ENCODE measurements at regions of chr6 and their contacts with region 1.

Region 1: DNA sequence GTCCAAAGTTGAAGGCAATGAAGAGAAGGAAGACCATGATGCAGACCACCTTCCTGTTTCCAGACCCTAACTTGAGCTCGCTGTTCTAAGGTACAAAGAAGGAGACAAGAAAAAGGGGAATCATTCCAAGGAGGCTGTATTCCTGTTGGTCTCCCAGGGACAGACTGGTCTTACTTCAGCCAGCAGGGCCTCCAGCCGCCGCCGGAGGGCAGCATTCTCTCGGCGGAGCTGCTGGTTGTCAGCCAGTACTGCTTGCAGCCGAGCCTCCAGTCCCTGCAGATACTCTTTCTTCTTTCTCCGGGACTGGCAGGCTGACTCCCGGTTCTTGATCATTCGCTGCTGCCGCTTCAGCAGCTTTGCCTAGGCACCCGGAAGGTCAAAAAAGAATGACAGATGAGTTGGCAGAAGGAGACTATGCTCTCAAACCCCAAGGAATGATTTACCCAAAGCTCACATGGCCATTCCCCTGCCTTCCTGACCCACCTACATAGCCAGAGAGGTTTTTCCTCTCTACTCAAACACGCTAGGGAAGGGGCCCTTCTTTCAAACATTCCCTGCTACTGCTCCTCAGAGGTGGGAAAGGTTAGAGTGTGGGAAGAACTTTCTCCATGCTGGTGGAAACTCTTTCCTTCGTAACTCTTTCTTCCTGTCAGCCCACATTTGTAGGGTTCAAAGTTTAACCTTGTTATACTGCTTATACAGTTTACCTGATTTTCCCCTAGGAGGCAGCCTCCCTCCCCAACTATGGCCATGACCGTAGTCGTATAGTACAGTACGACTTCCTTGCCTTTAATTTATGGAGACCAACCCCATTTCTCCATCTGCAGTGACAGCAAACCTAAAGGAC is 9.0 kb downstream of the ATF6B start:
- DNase-seq: peak; percentile 68 to 81
- H3K4me3 ChIP-seq: no peak overlapping the region
- H3K27ac ChIP-seq: no peak overlapping the region
- H3K4me1 ChIP-seq: peaks cover 16% of the 10 kb centered on the region; the same call in 1 of the 2 replicates
- H3K27me3 ChIP-seq: no peaks in the 10 kb centered on the region
- CTCF ChIP-seq: peak; percentile 86

Region 2: GRCh38 chr6:31453259-31453658 is 665.7 kb before region 1 on chr6:
- CTCF ChIA-PET with region 1: no interaction called
- POLR2A ChIA-PET with region 1: no interaction called
- intact Hi-C with region 1: no loop called
- DNase-seq: no peak
- H3K4me3 ChIP-seq: no peak overlapping the region
- H3K27ac ChIP-seq: no peak overlapping the region
- H3K4me1 ChIP-seq: no peaks in the 10 kb centered on the region
- H3K27me3 ChIP-seq: peaks cover 24% of the 10 kb centered on the region; the same call in 1 of the 2 replicates
- CTCF ChIP-seq: no peak

Region 3: GRCh38 chr6:31763619-31763940 is 355.4 kb before region 1 on chr6:
- CTCF ChIA-PET with region 1: no interaction called
- POLR2A ChIA-PET with region 1: no interaction called
- intact Hi-C with region 1: no loop called
- DNase-seq: no peak
- H3K4me3 ChIP-seq: no peak overlapping the region
- H3K27ac ChIP-seq: no peak overlapping the region
- H3K4me1 ChIP-seq: peaks cover 5% of the 10 kb centered on the region; the same call in 1 of the 2 replicates
- H3K27me3 ChIP-seq: no peaks in the 10 kb centered on the region
- CTCF ChIP-seq: no peak

Region 4: DNA sequence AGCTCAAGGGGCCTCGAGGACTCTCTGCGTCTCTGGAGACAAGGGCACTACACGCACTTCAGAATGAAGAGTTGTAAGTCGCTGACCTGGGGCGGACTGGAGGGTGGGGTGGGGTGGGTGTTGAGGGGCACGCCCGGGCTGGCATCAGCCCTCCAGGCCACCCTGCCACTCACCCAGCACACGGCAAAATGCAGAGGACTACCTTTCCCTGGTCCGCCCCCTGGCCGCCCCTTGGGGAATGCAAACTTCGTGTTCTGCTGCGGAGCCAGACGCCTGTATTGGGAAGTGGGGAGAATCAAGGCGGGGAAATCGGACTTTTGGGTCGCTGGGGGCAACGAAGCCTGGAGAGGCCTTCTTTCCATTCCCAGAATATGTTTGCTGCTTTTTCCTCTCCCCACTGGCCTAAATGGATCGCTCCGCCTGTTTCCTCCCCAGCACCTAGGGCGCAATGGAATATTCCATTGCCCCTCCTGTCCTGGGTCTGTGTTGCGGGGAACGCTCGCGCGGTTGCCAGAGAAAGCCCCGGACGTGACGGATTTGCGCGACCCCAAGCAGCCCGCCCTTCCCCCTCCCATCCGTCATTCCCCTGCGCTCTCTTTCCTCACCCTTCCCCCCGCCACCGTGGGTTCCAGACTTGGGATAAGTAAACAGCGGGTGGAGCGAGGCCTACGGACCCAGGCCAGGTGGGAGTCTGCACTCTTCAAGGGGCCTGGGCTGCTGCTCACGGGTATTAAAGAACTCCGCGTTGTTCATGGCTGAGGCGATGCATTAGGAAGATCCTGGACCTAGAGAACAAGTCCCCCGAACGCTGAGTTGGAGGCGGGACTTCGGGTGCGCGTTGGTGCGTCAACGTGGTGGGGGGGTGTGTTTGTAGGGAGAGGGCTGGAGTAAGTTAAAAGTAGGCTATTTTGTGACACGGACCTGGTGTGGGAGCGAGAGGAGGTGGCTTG is 34.8 kb after region 1 on chr6 and contains the start of gene PPT2:
- CTCF ChIA-PET with region 1: interaction called, 10 read pairs
- POLR2A ChIA-PET with region 1: no interaction called
- intact Hi-C with region 1: loop called (anchors 1 kb)
- DNase-seq: peak; percentile 70 to 77
- H3K4me3 ChIP-seq: peak within 1 kb of the TSS; percentile 77
- H3K27ac ChIP-seq: peak within 1 kb of the TSS; percentile 96
- H3K4me1 ChIP-seq: peaks cover 18% of the 10 kb centered on the region
- H3K27me3 ChIP-seq: no peaks in the 10 kb centered on the region
- CTCF ChIP-seq: peak; percentile 45; the same call in 1 of the 2 replicates
- total RNA-seq, gene PPT2: 38.2 and 42.5 TPM in 2 replicates

Region 5: GRCh38 chr6:32195652-32195901 is 76.6 kb after region 1 on chr6:
- CTCF ChIA-PET with region 1: interaction called, 4 read pairs
- POLR2A ChIA-PET with region 1: no interaction called
- intact Hi-C with region 1: loop called (anchors 5 kb)
- DNase-seq: peak; percentile 98 to 100
- H3K4me3 ChIP-seq: peak overlapping the region; percentile 96; the same call in 1 of the 2 replicates
- H3K27ac ChIP-seq: no peak overlapping the region
- H3K4me1 ChIP-seq: peaks cover 18% of the 10 kb centered on the region
- H3K27me3 ChIP-seq: peaks cover 4% of the 10 kb centered on the region
- CTCF ChIP-seq: no peak; the same call in none of the 2 replicates

Region 6: DNA sequence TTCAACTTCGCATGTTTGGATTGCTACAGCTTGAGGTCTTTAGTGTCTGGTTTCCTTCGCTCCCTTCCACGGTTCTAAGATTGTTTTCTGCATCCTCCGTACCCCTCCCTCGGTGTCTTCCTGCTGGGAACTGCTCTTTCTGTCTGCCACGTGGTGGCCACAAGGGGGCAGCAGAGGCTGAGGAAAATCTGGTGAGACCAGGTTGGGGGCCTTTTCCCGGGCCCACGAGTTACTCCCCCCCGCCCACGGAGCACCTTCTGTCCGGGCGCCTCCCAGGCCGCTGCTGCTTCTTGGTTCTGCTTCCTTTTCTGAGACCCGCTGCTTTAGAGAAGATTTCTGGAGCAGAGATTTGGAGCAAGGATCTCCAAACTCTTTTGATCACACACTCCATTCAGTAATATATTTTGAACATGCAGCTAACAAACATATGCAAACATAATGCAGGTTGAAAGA is 126.0 kb after region 1 on chr6:
- CTCF ChIA-PET with region 1: no interaction called
- POLR2A ChIA-PET with region 1: no interaction called
- intact Hi-C with region 1: loop called (anchors 1 kb)
- DNase-seq: peak in 1 of 2 experiments; percentile 71
- H3K4me3 ChIP-seq: no peak overlapping the region
- H3K27ac ChIP-seq: no peak overlapping the region
- H3K4me1 ChIP-seq: no peaks in the 10 kb centered on the region
- H3K27me3 ChIP-seq: peaks cover 23% of the 10 kb centered on the region
- CTCF ChIP-seq: peak; percentile 95

Region 7: DNA sequence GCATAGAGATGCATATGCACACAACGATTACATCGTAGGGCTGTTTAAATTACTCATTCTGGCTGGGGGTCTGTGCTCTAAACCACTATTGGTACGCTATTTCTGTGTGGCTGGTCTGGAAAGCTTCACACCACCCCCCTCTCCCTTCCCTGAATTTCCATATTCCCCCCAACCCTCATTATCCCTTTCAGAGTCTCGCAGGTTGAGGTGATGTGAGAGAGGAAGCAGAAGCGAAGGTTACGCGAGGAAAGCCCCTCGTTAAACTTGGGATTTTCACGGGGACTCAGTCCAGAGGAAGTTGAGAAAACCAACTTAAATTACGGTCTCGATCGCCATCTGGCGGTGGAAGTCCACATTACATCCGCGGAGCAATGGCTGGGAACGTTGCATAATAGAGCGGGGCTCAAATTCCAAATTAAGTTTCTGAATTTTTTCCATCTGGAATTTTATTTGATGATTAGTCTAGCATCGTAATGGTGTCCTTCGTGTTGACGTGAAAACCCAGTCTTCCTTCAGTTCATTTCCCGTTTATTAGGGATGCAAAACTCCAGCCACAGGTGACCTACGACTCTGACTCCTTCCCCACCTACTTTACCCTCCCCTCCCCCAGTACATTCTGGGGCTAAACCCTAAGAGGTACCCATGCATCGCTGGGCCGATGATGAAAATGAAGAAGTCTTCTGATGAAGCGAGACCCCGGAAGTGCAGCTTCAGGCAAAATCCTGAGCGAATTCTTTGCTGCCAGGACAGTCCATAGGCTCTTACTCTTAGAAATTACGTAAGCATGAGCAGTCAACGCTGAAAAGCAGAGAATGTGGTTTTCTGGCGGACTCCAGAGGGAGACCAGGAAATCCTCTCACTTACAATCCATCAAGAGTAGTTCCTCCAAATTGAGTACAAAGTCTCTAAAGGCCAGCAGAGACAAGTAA is 678.1 kb after region 1 on chr6:
- CTCF ChIA-PET with region 1: no interaction called
- POLR2A ChIA-PET with region 1: interaction called, 5 read pairs
- intact Hi-C with region 1: loop called (anchors 5 kb)
- DNase-seq: peak; percentile 51 to 64
- H3K4me3 ChIP-seq: peak overlapping the region; percentile 30; the same call in 1 of the 2 replicates
- H3K27ac ChIP-seq: no peak overlapping the region
- H3K4me1 ChIP-seq: no peaks in the 10 kb centered on the region
- H3K27me3 ChIP-seq: peaks cover 35% of the 10 kb centered on the region
- CTCF ChIP-seq: peak; percentile 94

Measured in PC-9 (cell line).